ENCODE measurements at regions of chr6 and their contacts with region 1.

Region 1: GRCh38 chr6:32522302-32523047 is 7.6 kb downstream of the HLA-DRB5 start:
- DNase-seq: no peak
- ATAC-seq: no peak
- H3K4me3 ChIP-seq: no peak overlapping the region
- H3K4me3 Mint-ChIP-seq: no peak overlapping the region
- H3K27ac ChIP-seq: no peak overlapping the region
- H3K27ac Mint-ChIP-seq: no peak overlapping the region
- H3K4me1 ChIP-seq: no peaks in the 10 kb centered on the region
- H3K4me1 Mint-ChIP-seq: peaks cover 0 to 16% of the 10 kb centered on the region in 2 donors
- H3K27me3 ChIP-seq: no peaks in the 10 kb centered on the region
- H3K27me3 Mint-ChIP-seq: peaks cover 3 to 9% of the 10 kb centered on the region in 2 donors
- CTCF ChIP-seq: no peak

Region 2: GRCh38 chr6:32070814-32071543 is 451.5 kb before region 1 on chr6:
- intact Hi-C with region 1: no loop called
- DNase-seq: no peak
- ATAC-seq: no peak
- H3K4me3 ChIP-seq: no peak overlapping the region
- H3K4me3 Mint-ChIP-seq: no peak overlapping the region
- H3K27ac ChIP-seq: no peak overlapping the region
- H3K27ac Mint-ChIP-seq: no peak overlapping the region
- H3K4me1 ChIP-seq: no peaks in the 10 kb centered on the region
- H3K4me1 Mint-ChIP-seq: no peaks in the 10 kb centered on the region
- H3K27me3 ChIP-seq: no peaks in the 10 kb centered on the region
- H3K27me3 Mint-ChIP-seq: peaks cover 0 to 11% of the 10 kb centered on the region in 2 donors
- CTCF ChIP-seq: no peak

Region 3: GRCh38 chr6:32558426-32559057 is 36.1 kb after region 1 on chr6:
- intact Hi-C with region 1: loop called (anchors 1 kb)
- DNase-seq: no peak
- ATAC-seq: no peak
- H3K4me3 ChIP-seq: no peak overlapping the region
- H3K4me3 Mint-ChIP-seq: no peak overlapping the region
- H3K27ac ChIP-seq: no peak overlapping the region
- H3K27ac Mint-ChIP-seq: no peak overlapping the region
- H3K4me1 ChIP-seq: no peaks in the 10 kb centered on the region
- H3K4me1 Mint-ChIP-seq: peaks cover 0 to 6% of the 10 kb centered on the region in 2 donors
- H3K27me3 ChIP-seq: no peaks in the 10 kb centered on the region
- H3K27me3 Mint-ChIP-seq: peaks cover 0 to 21% of the 10 kb centered on the region in 2 donors
- CTCF ChIP-seq: no peak

Region 4: DNA sequence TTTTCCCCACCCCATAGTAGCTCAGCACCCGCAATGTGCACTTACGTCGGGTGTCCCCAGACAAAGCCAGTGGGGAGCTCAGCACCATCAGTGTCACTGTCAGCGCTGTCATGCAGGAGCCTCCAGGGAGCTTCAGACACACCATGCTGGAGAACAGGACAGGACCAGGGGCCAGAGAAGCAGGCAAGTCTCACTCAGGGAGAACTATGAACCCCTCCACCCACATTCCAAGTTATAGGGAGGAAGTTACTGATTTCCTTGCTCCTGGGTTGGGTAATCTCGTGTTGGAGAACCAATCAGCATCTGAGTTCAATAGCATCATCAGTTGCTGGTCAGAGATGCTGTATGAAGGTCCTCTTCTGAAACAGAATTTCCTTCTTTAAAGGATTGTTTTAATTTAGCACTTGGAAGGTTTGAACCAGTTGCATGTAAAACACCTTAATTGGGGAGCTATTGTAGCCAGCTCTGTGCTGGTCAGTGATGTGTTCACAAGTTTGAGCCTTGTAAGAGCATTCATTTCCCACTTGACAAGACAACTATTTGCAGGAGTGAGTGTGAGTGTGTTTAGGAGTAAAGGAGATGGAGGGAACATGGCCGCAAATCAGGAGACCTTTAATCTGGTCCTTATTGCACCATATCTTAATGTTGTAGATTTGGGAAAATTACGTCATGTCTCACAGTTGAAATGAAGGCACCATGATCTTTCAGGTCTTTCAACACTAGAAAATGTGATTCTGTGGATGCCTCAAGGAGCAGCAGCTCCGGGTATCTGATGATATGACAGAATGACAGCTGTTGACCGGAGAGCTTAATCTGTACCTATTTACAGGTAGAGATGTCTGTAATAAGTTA is 67.3 kb after region 1 on chr6 and contains the start of gene HLA-DRB1:
- intact Hi-C with region 1: loop called (anchors 1 kb)
- DNase-seq: peak; percentile 38 to 59
- ATAC-seq: peak; percentile 96 to 97 (median 96)
- H3K4me3 ChIP-seq: peak within 1 kb of the TSS; percentile 36
- H3K4me3 Mint-ChIP-seq: peak within 1 kb of the TSS; percentile 78
- H3K27ac ChIP-seq: peak within 1 kb of the TSS; percentile 73
- H3K27ac Mint-ChIP-seq: peak within 1 kb of the TSS; percentile 27 to 87
- H3K4me1 ChIP-seq: no peaks in the 10 kb centered on the region
- H3K4me1 Mint-ChIP-seq: peaks cover 40 to 44% of the 10 kb centered on the region in 2 donors
- H3K27me3 ChIP-seq: no peaks in the 10 kb centered on the region
- H3K27me3 Mint-ChIP-seq: peaks cover 6% of the 10 kb centered on the region in 2 donors
- CTCF ChIP-seq: no peak
- total RNA-seq, gene HLA-DRB1: 42.8 to 123 (median 53.9) TPM

Region 5: GRCh38 chr6:32940656-32941213 is 418.3 kb after region 1 on chr6 and contains the start of gene HLA-DMB:
- intact Hi-C with region 1: no loop called
- DNase-seq: peak; percentile 31 to 90
- ATAC-seq: peak; percentile 71 to 80 (median 78)
- H3K4me3 ChIP-seq: peak within 1 kb of the TSS; percentile 74
- H3K4me3 Mint-ChIP-seq: peak within 1 kb of the TSS; percentile 88
- H3K27ac ChIP-seq: peak within 1 kb of the TSS; percentile 96
- H3K27ac Mint-ChIP-seq: peak within 1 kb of the TSS; percentile 92 to 98
- H3K4me1 ChIP-seq: peaks cover 75% of the 10 kb centered on the region
- H3K4me1 Mint-ChIP-seq: peaks cover 59 to 60% of the 10 kb centered on the region in 2 donors
- H3K27me3 ChIP-seq: no peaks in the 10 kb centered on the region
- H3K27me3 Mint-ChIP-seq: no peaks in the 10 kb centered on the region
- CTCF ChIP-seq: no peak
- total RNA-seq, gene HLA-DMB: 19.5 to 28.1 (median 23.0) TPM

Region 6: GRCh38 chr6:33288921-33289748 is 766.7 kb after region 1 on chr6 and contains the starts of genes PFDN6 and WDR46:
- intact Hi-C with region 1: no loop called
- DNase-seq: peak; percentile 78 to 92
- ATAC-seq: peak; percentile 95 to 96 (median 96)
- H3K4me3 ChIP-seq: peak within 1 kb of the TSS; percentile 81
- H3K4me3 Mint-ChIP-seq: peak within 1 kb of the TSS; percentile 99
- H3K27ac ChIP-seq: peak within 1 kb of the TSS; percentile 51
- H3K27ac Mint-ChIP-seq: peak within 1 kb of the TSS; percentile 92 to 94
- H3K4me1 ChIP-seq: peaks cover 23% of the 10 kb centered on the region
- H3K4me1 Mint-ChIP-seq: peaks cover 39 to 48% of the 10 kb centered on the region in 2 donors
- H3K27me3 ChIP-seq: no peaks in the 10 kb centered on the region
- H3K27me3 Mint-ChIP-seq: no peaks in the 10 kb centered on the region
- CTCF ChIP-seq: no peak
- total RNA-seq, gene PFDN6: 19.2 to 26.5 (median 22.7) TPM
- total RNA-seq, gene WDR46: 33.6 to 56.3 (median 47.0) TPM

Measured in natural killer cell (primary cell).